GM12878 (cell line): ENCODE measurements at regions of chr2 and their contacts with region 1.

Region 1: GRCh38 chr2:14903709-14904374 is 271.3 kb downstream of the LRATD1 start:
- DNase-seq: peak; percentile 5
- ATAC-seq: peak; percentile 99
- H3K4me3 ChIP-seq: no peak overlapping the region
- H3K27ac ChIP-seq: no peak overlapping the region
- H3K4me1 ChIP-seq: no peaks in the 10 kb centered on the region
- H3K27me3 ChIP-seq: no peaks in the 10 kb centered on the region
- CTCF ChIP-seq: peak; percentile 96 to 98 (median 98)
- EP300 ChIP-seq: no peak
- POLR2A ChIP-seq: no peak
- RAD21 ChIP-seq: peak; percentile 77

Region 2: DNA sequence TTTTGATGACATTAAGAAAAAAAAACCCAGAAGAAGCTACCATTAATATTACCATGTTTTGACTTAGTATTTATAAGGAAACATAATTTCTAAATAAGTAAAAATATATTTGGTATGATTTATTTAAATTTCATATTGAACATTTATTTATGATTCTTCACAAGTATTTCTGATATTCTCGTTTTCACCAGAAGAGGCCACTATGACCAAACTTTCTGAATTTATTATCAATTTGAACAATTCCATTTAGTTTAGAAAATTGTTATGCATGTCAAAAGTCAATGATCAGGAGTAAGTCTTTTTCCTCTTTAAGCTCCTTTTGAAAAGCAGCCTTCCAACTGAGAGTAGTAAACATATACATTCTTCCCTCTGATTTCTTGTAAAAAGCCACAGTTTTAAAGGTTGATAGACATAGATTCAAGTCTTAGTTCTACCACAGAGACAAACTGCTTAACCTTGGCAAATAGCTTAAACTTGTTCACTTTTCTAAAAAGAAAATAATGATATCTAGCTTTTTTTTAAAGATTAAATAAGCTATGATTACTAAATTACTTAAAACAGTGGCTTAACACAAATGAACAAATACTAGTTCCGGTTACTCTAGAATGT is 1857.2 kb before region 1 on chr2:
- CTCF ChIA-PET with region 1: interaction called, 6 read pairs
- POLR2A ChIA-PET with region 1: no interaction called
- RAD21 ChIA-PET with region 1: no interaction called
- SMC1A ChIA-PET with region 1: no interaction called
- in situ Hi-C with region 1: loop called (anchors 10 kb)
- intact Hi-C with region 1: loop called (anchors 2 kb)
- DNase-seq: no peak
- ATAC-seq: no peak
- H3K4me3 ChIP-seq: no peak overlapping the region
- H3K27ac ChIP-seq: no peak overlapping the region
- H3K4me1 ChIP-seq: no peaks in the 10 kb centered on the region
- H3K27me3 ChIP-seq: no peaks in the 10 kb centered on the region
- CTCF ChIP-seq: peak in 1 of 3 experiments; percentile 17; a peak in 1 of 6 replicates
- EP300 ChIP-seq: no peak
- POLR2A ChIP-seq: no peak
- RAD21 ChIP-seq: peak; percentile 36; the same call in 1 of the 2 replicates

Region 3: DNA sequence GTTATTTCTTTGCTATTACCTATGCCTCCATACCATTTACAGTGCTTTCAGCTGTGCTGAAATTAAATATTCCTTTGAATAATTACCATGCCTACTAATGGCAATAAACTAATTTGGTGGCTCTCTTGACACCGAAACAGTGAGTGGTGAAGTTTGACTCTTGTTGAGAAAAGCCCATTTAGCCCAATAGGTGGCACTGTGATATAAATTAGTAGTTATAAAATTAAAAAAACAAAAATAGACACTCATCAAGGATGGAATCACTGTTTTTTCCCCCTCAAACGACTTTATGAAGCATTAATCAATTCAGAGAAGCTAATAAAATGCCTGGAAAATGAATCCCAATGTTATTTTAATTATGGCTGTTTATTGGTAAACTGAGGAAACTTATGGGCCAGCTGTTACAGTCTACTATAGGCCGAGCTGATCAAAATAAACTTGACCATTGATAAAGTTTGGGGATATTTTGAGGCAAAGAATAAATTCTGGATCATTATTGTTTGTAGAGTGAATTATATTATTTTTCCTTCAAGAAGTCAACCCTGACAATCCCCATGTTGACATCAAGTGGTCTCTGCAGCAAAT is 1847.5 kb before region 1 on chr2:
- CTCF ChIA-PET with region 1: no interaction called
- POLR2A ChIA-PET with region 1: no interaction called
- RAD21 ChIA-PET with region 1: no interaction called
- SMC1A ChIA-PET with region 1: no interaction called
- in situ Hi-C with region 1: loop called (anchors 10 kb)
- intact Hi-C with region 1: no loop called
- DNase-seq: no peak
- ATAC-seq: peak; percentile 41; the same call in 2 of the 3 replicates
- H3K4me3 ChIP-seq: no peak overlapping the region
- H3K27ac ChIP-seq: no peak overlapping the region
- H3K4me1 ChIP-seq: no peaks in the 10 kb centered on the region
- H3K27me3 ChIP-seq: no peaks in the 10 kb centered on the region
- CTCF ChIP-seq: peak; percentile 17 to 46 (median 25); a peak in 3 of 6 replicates
- EP300 ChIP-seq: no peak
- POLR2A ChIP-seq: no peak
- RAD21 ChIP-seq: 0 out of 2 replicates have a peak, but pooled peaks have one; percentile 19

Region 4: GRCh38 chr2:13193898-13194297 is 1709.9 kb before region 1 on chr2:
- CTCF ChIA-PET with region 1: no interaction called
- POLR2A ChIA-PET with region 1: no interaction called
- RAD21 ChIA-PET with region 1: no interaction called
- SMC1A ChIA-PET with region 1: no interaction called
- in situ Hi-C with region 1: no loop called
- intact Hi-C with region 1: loop called (anchors 10 kb)
- DNase-seq: peak; percentile 31
- ATAC-seq: peak; percentile 92
- H3K4me3 ChIP-seq: no peak overlapping the region
- H3K27ac ChIP-seq: no peak overlapping the region
- H3K4me1 ChIP-seq: no peaks in the 10 kb centered on the region
- H3K27me3 ChIP-seq: no peaks in the 10 kb centered on the region
- CTCF ChIP-seq: peak; percentile 42 to 68 (median 56); a peak in 5 of 6 replicates
- EP300 ChIP-seq: no peak
- POLR2A ChIP-seq: no peak
- RAD21 ChIP-seq: peak; percentile 83

Region 5: GRCh38 chr2:14428056-14428455 is 475.8 kb before region 1 on chr2:
- CTCF ChIA-PET with region 1: interaction called, 3 read pairs
- POLR2A ChIA-PET with region 1: no interaction called
- RAD21 ChIA-PET with region 1: no interaction called
- SMC1A ChIA-PET with region 1: no interaction called
- in situ Hi-C with region 1: no loop called
- intact Hi-C with region 1: loop called (anchors 2 kb)
- DNase-seq: no peak
- ATAC-seq: no peak
- H3K4me3 ChIP-seq: no peak overlapping the region
- H3K27ac ChIP-seq: no peak overlapping the region
- H3K4me1 ChIP-seq: no peaks in the 10 kb centered on the region
- H3K27me3 ChIP-seq: no peaks in the 10 kb centered on the region
- CTCF ChIP-seq: peak in 1 of 3 experiments; percentile 19; a peak in 1 of 6 replicates
- EP300 ChIP-seq: no peak
- POLR2A ChIP-seq: no peak
- RAD21 ChIP-seq: peak; percentile 27; the same call in 1 of the 2 replicates

Region 6: GRCh38 chr2:15577071-15577735 is 673.4 kb after region 1 on chr2:
- CTCF ChIA-PET with region 1: interaction called, 22 read pairs
- POLR2A ChIA-PET with region 1: no interaction called
- RAD21 ChIA-PET with region 1: interaction called, 5 read pairs
- SMC1A ChIA-PET with region 1: interaction called, 4 read pairs
- in situ Hi-C with region 1: loop called (anchors 5 kb)
- intact Hi-C with region 1: loop called (anchors 5 kb)
- DNase-seq: peak; percentile 38
- ATAC-seq: peak; percentile 99
- H3K4me3 ChIP-seq: no peak overlapping the region
- H3K27ac ChIP-seq: no peak overlapping the region
- H3K4me1 ChIP-seq: 0 out of 2 replicates have a peak, but pooled peaks cover 3% of the 10 kb centered on the region
- H3K27me3 ChIP-seq: no peaks in the 10 kb centered on the region
- CTCF ChIP-seq: peak; percentile 85 to 91 (median 87)
- EP300 ChIP-seq: no peak
- POLR2A ChIP-seq: no peak
- RAD21 ChIP-seq: peak; percentile 95

Region 7: GRCh38 chr2:15588329-15588919 is 684.6 kb after region 1 on chr2:
- CTCF ChIA-PET with region 1: interaction called, 4 read pairs
- POLR2A ChIA-PET with region 1: no interaction called
- RAD21 ChIA-PET with region 1: no interaction called
- SMC1A ChIA-PET with region 1: no interaction called
- in situ Hi-C with region 1: loop called (anchors 5 kb)
- intact Hi-C with region 1: no loop called
- DNase-seq: no peak
- ATAC-seq: no peak
- H3K4me3 ChIP-seq: no peak overlapping the region
- H3K27ac ChIP-seq: no peak overlapping the region
- H3K4me1 ChIP-seq: no peaks in the 10 kb centered on the region; the same call in none of the 2 replicates
- H3K27me3 ChIP-seq: no peaks in the 10 kb centered on the region
- CTCF ChIP-seq: peak; percentile 40 to 52 (median 44)
- EP300 ChIP-seq: no peak
- POLR2A ChIP-seq: no peak
- RAD21 ChIP-seq: peak; percentile 56